ENCODE measurements at regions of chr3 and their contacts with region 1.

Region 1: DNA sequence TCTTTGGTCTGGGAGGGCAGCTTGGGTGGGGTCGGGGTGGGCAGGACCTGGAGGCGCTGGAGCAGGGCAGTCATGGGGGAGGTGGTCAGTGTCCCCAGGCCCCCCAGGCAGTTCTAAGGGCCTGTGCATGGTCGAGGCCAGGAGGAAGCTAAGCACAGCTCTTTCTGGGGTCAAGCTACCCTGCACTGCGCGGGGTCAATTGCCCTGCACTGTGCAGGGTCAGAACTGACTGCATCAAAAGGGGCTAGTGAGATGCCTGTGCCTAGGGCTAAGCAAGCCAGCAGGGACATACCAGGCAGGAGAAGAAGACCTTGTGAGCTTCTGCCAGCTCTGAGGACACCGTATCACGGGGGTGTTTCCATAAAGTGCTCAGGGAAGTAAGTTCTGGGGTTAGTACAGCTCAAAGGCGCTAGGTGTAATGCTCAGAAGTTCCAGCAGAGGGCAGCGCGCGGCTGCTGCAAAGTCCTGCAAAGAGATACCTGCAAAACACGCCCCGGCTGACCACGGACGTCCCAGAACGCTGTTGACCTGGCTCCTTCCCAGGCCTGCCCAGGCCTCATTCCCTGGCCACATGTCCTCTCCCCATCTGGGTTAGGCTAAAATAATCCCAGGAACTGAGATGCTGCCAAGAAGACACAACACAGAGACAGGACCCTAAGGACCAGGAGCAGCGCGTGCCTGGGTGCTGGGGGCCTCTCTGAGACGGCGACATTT is 18.8 kb upstream of the IQSEC1 start:
- DNase-seq: peak; percentile 81
- H3K4me3 ChIP-seq: no peak overlapping the region
- H3K27ac ChIP-seq: no peak overlapping the region
- H3K4me1 ChIP-seq: peaks cover 29% of the 10 kb centered on the region
- CTCF ChIP-seq: peak; percentile 91

Region 2: DNA sequence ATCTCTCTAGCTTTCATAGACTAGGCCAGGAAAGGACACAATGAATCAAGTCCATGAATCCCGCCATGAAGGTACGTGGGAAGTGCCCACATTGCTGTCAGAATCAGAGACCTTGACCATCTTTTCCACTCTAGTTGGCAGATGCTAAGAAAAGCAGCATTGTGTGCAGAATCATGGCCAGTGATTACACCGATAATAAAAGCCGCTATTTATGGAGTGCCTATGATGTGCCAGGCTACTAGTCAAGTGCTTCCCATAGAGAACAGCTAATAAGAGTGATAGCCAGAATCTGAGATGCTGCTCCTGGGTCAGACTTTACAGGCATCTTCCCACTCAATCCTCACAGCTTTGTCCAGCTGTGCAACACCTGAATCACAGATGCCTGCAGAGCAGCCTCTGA is 237.5 kb before region 1 on chr3:
- CTCF ChIA-PET with region 1: no interaction called
- POLR2A ChIA-PET with region 1: no interaction called
- intact Hi-C with region 1: no loop called
- DNase-seq: no peak
- H3K4me3 ChIP-seq: no peak overlapping the region
- H3K27ac ChIP-seq: no peak overlapping the region
- H3K4me1 ChIP-seq: no peaks in the 10 kb centered on the region
- CTCF ChIP-seq: no peak

Region 3: GRCh38 chr3:13022348-13023234 is 69.5 kb before region 1 on chr3:
- CTCF ChIA-PET with region 1: no interaction called
- POLR2A ChIA-PET with region 1: no interaction called
- intact Hi-C with region 1: no loop called
- DNase-seq: peak; percentile 75
- H3K4me3 ChIP-seq: peak overlapping the region; percentile 70
- H3K27ac ChIP-seq: peak overlapping the region; percentile 67
- H3K4me1 ChIP-seq: peaks cover 65% of the 10 kb centered on the region
- CTCF ChIP-seq: no peak

Region 4: GRCh38 chr3:13057282-13058040 is 34.6 kb before region 1 on chr3:
- CTCF ChIA-PET with region 1: no interaction called
- POLR2A ChIA-PET with region 1: no interaction called
- intact Hi-C with region 1: no loop called
- DNase-seq: no peak
- H3K4me3 ChIP-seq: no peak overlapping the region
- H3K27ac ChIP-seq: no peak overlapping the region
- H3K4me1 ChIP-seq: peaks cover 11% of the 10 kb centered on the region
- CTCF ChIP-seq: peak; percentile 35; the same call in 1 of the 2 replicates

Region 5: GRCh38 chr3:13192471-13193213 is 100.6 kb after region 1 on chr3:
- CTCF ChIA-PET with region 1: interaction called, 4 read pairs
- POLR2A ChIA-PET with region 1: no interaction called
- intact Hi-C with region 1: loop called (anchors 1 kb)
- DNase-seq: no peak
- H3K4me3 ChIP-seq: no peak overlapping the region
- H3K27ac ChIP-seq: no peak overlapping the region
- H3K4me1 ChIP-seq: peaks cover 24% of the 10 kb centered on the region
- CTCF ChIP-seq: peak; percentile 56; the same call in 1 of the 2 replicates

Region 6: GRCh38 chr3:13217736-13218540 is 125.9 kb after region 1 on chr3:
- CTCF ChIA-PET with region 1: no interaction called
- POLR2A ChIA-PET with region 1: no interaction called
- intact Hi-C with region 1: no loop called
- DNase-seq: no peak
- H3K4me3 ChIP-seq: no peak overlapping the region
- H3K27ac ChIP-seq: no peak overlapping the region
- H3K4me1 ChIP-seq: no peaks in the 10 kb centered on the region
- CTCF ChIP-seq: no peak

Region 7: GRCh38 chr3:13301286-13301987 is 209.4 kb after region 1 on chr3:
- CTCF ChIA-PET with region 1: interaction called, 3 read pairs
- POLR2A ChIA-PET with region 1: no interaction called
- intact Hi-C with region 1: loop called (anchors 5 kb)
- DNase-seq: no peak
- H3K4me3 ChIP-seq: no peak overlapping the region
- H3K27ac ChIP-seq: no peak overlapping the region
- H3K4me1 ChIP-seq: peaks cover 28% of the 10 kb centered on the region
- CTCF ChIP-seq: no peak

Region 8: DNA sequence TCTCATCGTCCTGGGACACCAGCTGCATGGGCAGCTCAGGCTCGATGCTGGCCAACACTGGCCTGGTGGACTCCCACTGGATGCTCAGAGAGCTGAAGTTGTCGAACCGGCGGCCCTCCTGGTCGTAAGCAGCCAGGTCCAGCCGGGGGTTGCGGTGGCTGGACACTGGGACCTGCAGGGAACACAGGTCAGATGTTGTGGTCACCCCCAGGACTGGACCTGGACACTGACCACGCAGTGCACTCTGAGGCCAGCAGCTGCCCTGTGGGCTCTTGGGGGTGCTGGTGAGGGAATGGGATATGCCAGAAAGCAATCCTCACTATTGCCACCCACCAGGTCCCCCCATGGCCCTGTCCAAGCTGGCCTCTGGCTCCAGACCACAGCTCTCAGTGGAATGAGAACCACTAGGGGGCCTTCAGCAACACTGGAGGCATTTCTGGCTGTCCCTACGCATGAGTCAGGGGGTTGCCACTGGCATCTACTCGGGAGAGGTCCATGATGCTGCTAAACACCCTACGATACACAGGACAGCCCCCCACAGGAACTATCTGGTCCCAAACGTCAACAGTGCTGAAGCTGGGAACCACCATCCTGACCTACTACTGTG is 262.0 kb after region 1 on chr3:
- CTCF ChIA-PET with region 1: no interaction called
- POLR2A ChIA-PET with region 1: no interaction called
- intact Hi-C with region 1: loop called (anchors 2 kb)
- DNase-seq: no peak
- H3K4me3 ChIP-seq: no peak overlapping the region
- H3K27ac ChIP-seq: no peak overlapping the region
- H3K4me1 ChIP-seq: peaks cover 12% of the 10 kb centered on the region
- CTCF ChIP-seq: peak; percentile 46

Region 9: GRCh38 chr3:13452490-13453335 is 360.7 kb after region 1 on chr3:
- CTCF ChIA-PET with region 1: interaction called, 10 read pairs
- POLR2A ChIA-PET with region 1: interaction called, 3 read pairs
- intact Hi-C with region 1: loop called (anchors 2 kb)
- DNase-seq: peak; percentile 77
- H3K4me3 ChIP-seq: peak overlapping the region; percentile 65
- H3K27ac ChIP-seq: peak overlapping the region; percentile 83
- H3K4me1 ChIP-seq: peaks cover 24% of the 10 kb centered on the region
- CTCF ChIP-seq: peak; percentile 95